OCI-LY7 (cell line): ENCODE measurements at regions of chr3 and their contacts with region 1.

Region 1: DNA sequence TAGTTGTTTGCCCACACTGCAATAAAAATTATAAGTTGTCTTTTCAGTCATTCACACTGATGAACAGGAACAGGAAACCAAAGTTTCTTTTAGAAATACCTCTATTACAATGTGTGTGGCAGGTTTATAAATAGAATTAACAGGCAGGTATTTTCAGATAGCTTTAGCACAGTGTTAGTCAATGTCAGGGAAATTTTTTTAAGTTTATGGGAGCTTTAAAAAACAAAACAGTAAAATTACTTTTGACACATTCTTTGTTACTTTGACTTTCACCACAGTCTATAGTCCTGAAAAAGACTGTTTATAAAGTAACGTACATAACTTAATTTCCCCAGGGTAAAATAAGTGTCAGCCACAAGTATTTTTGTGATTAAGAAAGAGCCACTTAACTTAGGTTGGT is 38.1 kb downstream of the SERPINI1 start:
- DNase-seq: peak; percentile 52
- H3K4me3 ChIP-seq: peak overlapping the region; percentile 54
- H3K27ac ChIP-seq: peak overlapping the region; percentile 89
- H3K4me1 ChIP-seq: peaks cover 59% of the 10 kb centered on the region
- CTCF ChIP-seq: no peak

Region 2: DNA sequence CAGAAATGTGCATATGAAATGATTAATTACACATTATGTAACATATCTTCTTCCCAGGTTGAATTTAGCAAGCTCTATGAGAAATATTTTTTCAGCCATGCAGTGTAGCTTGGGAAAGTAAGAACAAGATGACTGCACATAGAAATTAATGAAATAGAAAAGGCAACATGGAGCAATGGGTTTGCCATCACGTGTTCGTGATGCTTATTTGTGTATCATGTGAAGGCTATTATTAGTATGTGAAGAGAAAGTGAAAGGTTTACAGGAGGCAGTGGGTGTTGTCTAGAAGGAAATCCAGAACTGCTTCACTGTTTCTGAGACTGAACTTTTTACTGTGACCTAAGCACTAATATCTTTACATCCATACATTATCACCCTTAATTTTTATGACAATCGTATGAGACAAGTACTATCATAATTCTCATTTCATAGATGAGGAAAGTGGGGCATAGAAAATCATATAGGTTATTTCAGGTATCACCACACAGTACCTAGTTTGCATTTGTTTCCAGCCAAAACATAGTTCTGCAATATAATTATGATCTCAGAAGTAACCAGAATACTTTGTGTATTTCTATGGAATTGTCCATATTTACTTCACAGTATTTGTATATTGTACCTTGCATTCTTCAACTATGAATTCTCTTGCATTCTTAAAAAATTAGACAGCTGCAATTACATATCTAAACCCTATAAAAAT is 23.2 kb before region 1 on chr3:
- CTCF ChIA-PET with region 1: interaction called, 4 read pairs
- POLR2A ChIA-PET with region 1: interaction called, 60 read pairs
- intact Hi-C with region 1: loop called (anchors 2 kb)
- DNase-seq: peak; percentile 81
- H3K4me3 ChIP-seq: peak overlapping the region; percentile 55
- H3K27ac ChIP-seq: peak overlapping the region; percentile 56
- H3K4me1 ChIP-seq: peaks cover 83% of the 10 kb centered on the region
- CTCF ChIP-seq: no peak

Region 3: DNA sequence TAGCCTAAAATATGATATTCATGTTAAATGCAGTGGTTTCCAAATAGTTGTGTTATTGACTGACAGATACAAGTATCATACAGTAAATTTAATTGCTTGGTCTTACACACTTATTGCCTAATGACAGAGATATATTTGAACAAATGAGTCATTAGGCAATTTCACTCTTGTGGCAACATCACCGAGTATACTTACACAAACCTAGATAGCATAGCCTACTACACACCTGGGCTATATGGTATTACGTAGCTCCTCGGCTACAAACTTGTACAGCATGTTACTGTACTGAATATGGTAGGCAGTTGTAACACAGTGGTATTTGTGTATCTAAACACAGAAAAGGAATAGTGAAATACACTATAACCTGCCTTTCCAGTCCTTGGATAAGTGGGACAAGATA is 12.2 kb after region 1 on chr3:
- CTCF ChIA-PET with region 1: no interaction called
- POLR2A ChIA-PET with region 1: interaction called, 11 read pairs
- intact Hi-C with region 1: no loop called
- DNase-seq: no peak
- H3K4me3 ChIP-seq: no peak overlapping the region
- H3K27ac ChIP-seq: no peak overlapping the region
- H3K4me1 ChIP-seq: no peaks in the 10 kb centered on the region
- CTCF ChIP-seq: no peak

Region 4: DNA sequence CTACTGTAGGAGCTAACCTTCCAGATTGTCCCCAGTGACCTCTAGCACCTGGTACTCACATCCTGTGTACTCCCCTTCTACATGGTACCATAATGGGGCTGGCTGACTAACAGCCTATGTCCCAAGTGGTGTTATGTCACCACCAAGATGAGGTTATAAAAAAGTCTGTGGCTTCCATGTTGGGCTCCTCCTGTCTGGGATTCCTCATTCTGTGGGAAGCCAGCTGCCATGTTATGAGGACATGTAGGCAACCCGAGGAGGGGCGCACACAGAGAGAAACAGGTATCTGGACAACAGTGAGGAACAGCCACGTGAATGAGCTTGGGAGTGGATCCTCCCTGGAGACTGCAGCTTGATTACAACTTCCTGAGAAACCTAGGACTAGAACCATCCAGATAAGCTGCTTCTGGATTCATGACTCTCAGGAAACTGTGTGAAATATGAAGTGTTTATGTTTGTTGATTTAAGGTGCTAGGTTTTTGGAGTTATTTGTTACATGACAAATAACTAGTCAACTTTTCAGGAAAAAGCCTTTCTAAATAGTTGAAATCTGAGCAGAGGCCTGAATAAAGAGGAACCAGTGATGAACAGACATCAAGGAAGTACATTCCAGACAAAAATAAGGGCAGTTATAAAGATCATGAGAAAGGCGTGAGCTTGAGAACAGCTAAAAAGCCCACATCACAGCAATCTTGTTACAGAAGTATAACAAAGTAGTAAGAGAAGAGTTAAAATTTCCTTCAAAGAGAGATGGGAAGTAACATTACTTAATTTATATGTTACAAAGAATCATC is 300.5 kb after region 1 on chr3:
- CTCF ChIA-PET with region 1: no interaction called
- POLR2A ChIA-PET with region 1: no interaction called
- intact Hi-C with region 1: no loop called
- DNase-seq: peak; percentile 36
- H3K4me3 ChIP-seq: no peak overlapping the region
- H3K27ac ChIP-seq: no peak overlapping the region
- H3K4me1 ChIP-seq: peaks cover 17% of the 10 kb centered on the region
- CTCF ChIP-seq: no peak